Transverse colon (tissue), 4 donors: ENCODE measurements at regions of chr4 and their contacts with region 1.

Region 1: DNA sequence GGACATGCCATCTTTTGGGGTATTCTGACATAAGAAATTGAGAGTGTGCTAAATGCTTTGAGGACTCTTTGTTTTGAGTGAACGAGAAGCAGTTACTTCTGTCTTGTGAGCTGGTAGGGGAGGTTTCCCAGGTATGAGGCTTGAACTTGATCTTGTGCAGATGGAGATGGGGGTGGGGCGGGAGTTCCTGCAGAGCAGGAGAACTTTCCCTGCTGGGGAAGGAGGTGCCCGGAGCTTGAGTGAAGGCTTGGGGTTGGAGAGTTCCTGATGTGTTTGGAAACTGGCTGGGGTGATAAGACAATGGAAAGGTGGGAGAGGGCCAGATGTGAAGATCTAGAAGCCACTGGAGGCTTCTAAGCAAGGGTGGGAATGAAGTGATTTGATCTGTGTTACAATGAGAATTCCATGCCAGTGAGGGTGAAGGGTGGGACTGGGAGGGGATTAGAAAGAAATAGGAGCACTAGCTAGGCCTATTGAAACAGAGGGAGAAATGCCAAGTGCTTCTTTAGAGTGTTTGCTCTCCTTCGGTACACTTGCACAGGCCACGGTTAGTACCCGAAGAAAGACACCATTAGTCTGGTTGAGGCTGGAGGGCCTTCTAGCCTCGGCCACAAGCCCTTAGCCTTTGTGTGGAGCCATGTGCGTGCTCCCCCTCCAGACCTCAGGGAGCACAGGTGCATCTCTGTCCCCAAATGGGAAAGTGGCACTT is 103.5 kb upstream of the STOX2 start:
- DNase-seq: no peak
- H3K4me3 ChIP-seq: no peak overlapping the region
- H3K27ac ChIP-seq: no peak overlapping the region
- H3K4me1 ChIP-seq: peaks cover 0 to 20% (median 8%) of the 10 kb centered on the region in 4 donors
- H3K27me3 ChIP-seq: peaks cover 40% of the 10 kb centered on the region
- CTCF ChIP-seq: no peak
- EP300 ChIP-seq: no peak
- POLR2A ChIP-seq: no peak

Region 2: GRCh38 chr4:183675625-183676024 is 126.0 kb before region 1 on chr4:
- in situ Hi-C with region 1: no loop called
- intact Hi-C with region 1: no loop called
- DNase-seq: no peak
- H3K4me3 ChIP-seq: no peak overlapping the region
- H3K27ac ChIP-seq: no peak overlapping the region
- H3K4me1 ChIP-seq: no peaks in the 10 kb centered on the region
- H3K27me3 ChIP-seq: no peaks in the 10 kb centered on the region
- CTCF ChIP-seq: no peak
- EP300 ChIP-seq: no peak
- POLR2A ChIP-seq: no peak

Region 3: GRCh38 chr4:184395971-184396391 is 594.4 kb after region 1 on chr4:
- in situ Hi-C with region 1: no loop called
- intact Hi-C with region 1: no loop called
- DNase-seq: no peak
- H3K4me3 ChIP-seq: no peak overlapping the region
- H3K27ac ChIP-seq: peak overlapping the region; percentile 21 to 63 (median 48)
- H3K4me1 ChIP-seq: peaks cover 0 to 8% (median 4%) of the 10 kb centered on the region in 4 donors
- H3K27me3 ChIP-seq: no peaks in the 10 kb centered on the region
- CTCF ChIP-seq: no peak
- EP300 ChIP-seq: no peak
- POLR2A ChIP-seq: no peak

Region 4: DNA sequence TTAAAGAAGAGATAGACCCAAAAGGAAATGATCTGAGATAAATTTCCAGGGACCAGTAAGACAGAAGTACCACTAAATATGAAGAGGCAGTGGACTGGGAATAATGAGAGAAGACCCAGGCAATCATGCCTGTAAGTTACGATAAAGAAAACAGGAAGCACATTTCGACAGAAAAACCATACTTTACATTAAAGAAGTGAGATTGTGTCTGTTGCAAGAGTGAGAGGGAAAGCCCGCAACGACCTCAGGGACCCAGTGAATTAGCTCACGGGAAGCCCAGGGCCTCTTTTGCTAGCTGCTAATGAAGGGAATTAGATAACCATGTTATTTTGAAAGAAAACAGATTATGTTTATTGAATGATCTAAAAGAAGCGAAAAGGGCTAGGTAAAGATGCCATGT is 1053.1 kb after region 1 on chr4:
- in situ Hi-C with region 1: no loop called
- intact Hi-C with region 1: loop called (anchors 5 kb)
- DNase-seq: peak; percentile 14
- H3K4me3 ChIP-seq: no peak overlapping the region
- H3K27ac ChIP-seq: no peak overlapping the region
- H3K4me1 ChIP-seq: no peaks in the 10 kb centered on the region
- H3K27me3 ChIP-seq: no peaks in the 10 kb centered on the region
- CTCF ChIP-seq: no peak
- EP300 ChIP-seq: no peak
- POLR2A ChIP-seq: no peak